ENCODE measurements at regions of chr14 and their contacts with region 1.

Region 1: GRCh38 chr14:103427485-103428443 is 42.5 kb downstream of the MARK3 start:
- DNase-seq: peak; percentile 89
- H3K4me3 ChIP-seq: no peak overlapping the region
- H3K27ac ChIP-seq: peak overlapping the region; percentile 73
- H3K4me1 ChIP-seq: peaks cover 53% of the 10 kb centered on the region
- H3K27me3 ChIP-seq: no peaks in the 10 kb centered on the region
- CTCF ChIP-seq: no peak

Region 2: DNA sequence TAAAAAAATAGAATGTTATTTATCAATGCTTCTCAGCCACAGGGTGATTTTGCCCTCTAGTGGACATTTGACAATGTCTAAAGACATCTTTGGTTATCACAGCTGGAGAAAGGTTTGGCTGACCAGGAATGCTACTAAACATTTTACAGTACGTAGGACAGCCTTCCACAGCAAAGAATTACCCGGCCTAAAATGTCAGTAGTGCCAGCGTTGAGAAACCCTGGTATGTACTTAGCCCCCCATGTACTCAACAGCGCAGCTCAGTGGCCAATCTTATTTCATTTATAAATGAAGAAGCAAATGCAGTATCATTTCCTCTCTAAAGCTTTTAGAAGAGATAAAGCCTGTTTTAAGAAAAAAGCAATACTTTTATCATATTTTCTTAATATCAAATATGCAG is 36.7 kb before region 1 on chr14:
- CTCF ChIA-PET with region 1: no interaction called
- POLR2A ChIA-PET with region 1: no interaction called
- intact Hi-C with region 1: loop called (anchors 5 kb)
- DNase-seq: peak; percentile 74
- H3K4me3 ChIP-seq: no peak overlapping the region
- H3K27ac ChIP-seq: no peak overlapping the region
- H3K4me1 ChIP-seq: peaks cover 31% of the 10 kb centered on the region
- H3K27me3 ChIP-seq: no peaks in the 10 kb centered on the region
- CTCF ChIP-seq: peak; percentile 87

Region 3: DNA sequence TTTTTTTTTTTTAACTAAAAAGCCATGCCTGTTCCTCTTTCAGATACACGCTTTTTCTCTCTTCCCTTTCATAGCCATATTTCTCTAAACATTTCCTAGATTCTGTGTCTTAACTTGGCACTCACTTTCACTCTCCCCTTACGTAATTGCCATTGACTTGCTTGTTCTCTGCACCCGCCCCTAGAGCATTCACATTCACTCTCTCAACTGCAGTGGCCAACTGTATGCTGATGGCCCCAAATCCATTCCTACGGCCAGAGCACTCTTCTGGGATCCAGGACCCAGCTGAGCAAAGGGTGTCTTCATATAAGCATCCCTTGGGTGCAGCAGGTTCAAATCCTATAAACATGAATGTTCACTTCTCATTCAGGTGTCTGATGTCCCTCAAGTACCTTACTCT is 35.4 kb after region 1 on chr14:
- CTCF ChIA-PET with region 1: no interaction called
- POLR2A ChIA-PET with region 1: no interaction called
- intact Hi-C with region 1: no loop called
- DNase-seq: no peak
- H3K4me3 ChIP-seq: no peak overlapping the region
- H3K27ac ChIP-seq: no peak overlapping the region
- H3K4me1 ChIP-seq: no peaks in the 10 kb centered on the region
- H3K27me3 ChIP-seq: no peaks in the 10 kb centered on the region
- CTCF ChIP-seq: no peak

Region 4: GRCh38 chr14:103628684-103629502 is 201.1 kb after region 1 on chr14 and contains the start of gene KLC1:
- CTCF ChIA-PET with region 1: interaction called, 13 read pairs
- POLR2A ChIA-PET with region 1: no interaction called
- intact Hi-C with region 1: no loop called
- DNase-seq: peak; percentile 80
- H3K4me3 ChIP-seq: peak within 1 kb of the TSS; percentile 99
- H3K27ac ChIP-seq: peak within 1 kb of the TSS; percentile 92
- H3K4me1 ChIP-seq: peaks cover 20% of the 10 kb centered on the region
- H3K27me3 ChIP-seq: no peaks in the 10 kb centered on the region
- CTCF ChIP-seq: no peak
- total RNA-seq, gene KLC1: 163 and 171 TPM in 2 replicates